ENCODE measurements at regions of chr12 and their contacts with region 1.

Region 1: DNA sequence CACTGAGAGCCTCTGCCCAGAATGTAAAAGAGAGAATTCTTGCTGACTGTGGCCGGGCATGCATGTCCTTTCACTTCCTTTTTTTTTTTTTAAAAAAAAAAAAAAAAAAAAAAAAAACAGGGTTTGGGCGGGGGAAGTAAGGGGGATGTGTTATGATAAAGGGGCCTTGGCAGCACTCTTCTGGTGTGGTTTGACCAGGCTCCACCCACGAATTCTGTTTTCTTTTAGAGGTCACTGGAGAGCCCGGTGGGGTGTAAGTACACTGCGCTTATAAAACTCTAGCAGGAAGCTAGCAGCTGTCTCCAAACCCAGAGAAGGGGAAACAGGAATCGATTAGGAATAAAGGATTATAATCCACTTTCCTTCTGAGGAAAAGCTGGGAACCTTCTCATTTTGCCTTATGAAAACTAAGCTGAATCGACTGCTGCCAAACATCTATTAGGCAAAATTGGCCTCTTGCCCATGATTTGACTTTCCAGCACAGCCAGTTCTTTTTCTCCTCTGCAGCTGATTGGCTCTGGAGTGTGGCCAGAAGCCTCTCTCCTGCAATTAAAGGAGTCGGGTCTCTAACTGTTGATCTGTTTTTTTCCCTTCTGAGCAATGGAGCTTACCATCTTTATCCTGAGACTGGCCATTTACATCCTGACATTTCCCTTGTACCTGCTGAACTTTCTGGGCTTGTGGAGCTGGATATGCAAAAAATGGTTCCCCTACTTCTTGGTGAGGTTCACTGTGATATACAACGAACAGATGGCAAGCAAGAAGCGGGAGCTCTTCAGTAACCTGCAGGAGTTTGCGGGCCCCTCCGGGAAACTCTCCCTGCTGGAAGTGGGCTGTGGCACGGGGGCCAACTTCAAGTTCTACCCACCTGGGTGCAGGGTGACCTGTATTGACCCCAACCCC is 27.7 kb upstream of the HIGD1C start:
- DNase-seq: peak; percentile 97
- H3K4me3 ChIP-seq: peak overlapping the region; percentile 65 to 92 (median 80)
- H3K27ac ChIP-seq: peak overlapping the region; percentile 95 to 99 (median 98)
- H3K4me1 ChIP-seq: peaks cover 30 to 34% of the 10 kb centered on the region in 2 donors
- H3K27me3 ChIP-seq: no peaks in the 10 kb centered on the region
- CTCF ChIP-seq: no peak
- POLR2A ChIP-seq: peak in 1 of 2 donors; percentile 93

Region 2: DNA sequence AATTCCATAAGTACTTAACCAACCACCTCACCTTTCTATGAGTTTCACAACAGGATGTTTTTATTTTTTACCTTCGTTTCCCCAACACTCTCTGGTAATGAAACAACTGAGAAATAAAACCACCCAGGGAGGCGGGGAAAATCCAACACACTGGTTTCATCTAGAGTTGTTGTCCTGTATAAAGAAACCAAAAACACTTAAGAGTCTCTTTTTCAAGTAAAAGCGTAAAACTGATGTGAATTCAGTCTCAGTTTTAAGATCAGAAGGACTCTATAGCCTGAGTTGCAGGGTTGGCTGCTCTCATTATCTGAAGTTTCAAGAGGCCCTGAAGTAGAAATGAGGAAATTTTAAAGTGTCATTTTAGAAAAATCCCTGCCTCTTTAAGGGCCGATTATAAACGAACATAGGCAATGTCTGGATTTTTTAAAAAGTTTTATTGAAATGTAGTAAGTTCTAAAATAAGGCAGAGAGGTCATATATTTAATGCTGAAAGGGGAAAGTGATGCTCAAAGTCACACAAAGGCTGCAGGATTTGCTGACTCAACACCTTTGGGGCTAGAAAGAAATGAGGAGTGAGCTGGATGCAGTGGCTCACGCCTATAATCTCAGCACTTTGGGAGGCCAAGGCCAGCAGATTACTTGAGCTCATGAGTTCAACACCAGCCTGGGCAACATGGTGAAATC is 54.8 kb after region 1 on chr12:
- intact Hi-C with region 1: loop called (anchors 5 kb)
- DNase-seq: peak; percentile 19 to 45
- H3K4me3 ChIP-seq: no peak overlapping the region
- H3K27ac ChIP-seq: peak overlapping the region; percentile 37 to 64 (median 64)
- H3K4me1 ChIP-seq: peaks cover 12 to 22% of the 10 kb centered on the region in 2 donors
- H3K27me3 ChIP-seq: no peaks in the 10 kb centered on the region
- CTCF ChIP-seq: no peak
- POLR2A ChIP-seq: no peak

Region 3: DNA sequence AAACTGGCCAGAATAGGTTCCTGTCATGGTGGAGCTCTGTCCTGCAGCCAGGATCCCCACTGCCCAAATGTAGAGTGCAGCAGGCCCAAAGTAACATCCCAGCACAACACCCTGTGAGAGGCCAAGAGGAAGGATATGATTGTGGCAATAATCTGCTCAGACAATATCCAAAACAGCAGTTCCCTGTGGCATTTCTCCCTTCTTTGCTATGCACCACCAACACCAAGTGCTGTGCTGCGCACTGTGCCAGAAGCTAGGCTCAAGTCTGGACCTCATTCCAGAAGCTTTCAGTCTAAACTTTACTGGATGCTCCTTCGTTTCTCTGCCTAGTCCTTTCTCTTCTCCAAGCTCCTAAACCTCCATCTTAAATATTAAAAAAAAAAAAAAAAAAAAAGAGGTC is 68.1 kb after region 1 on chr12:
- intact Hi-C with region 1: no loop called
- DNase-seq: peak; percentile 89 to 91
- H3K4me3 ChIP-seq: no peak overlapping the region
- H3K27ac ChIP-seq: peak overlapping the region; percentile 43 to 73 (median 61)
- H3K4me1 ChIP-seq: peaks cover 17 to 30% of the 10 kb centered on the region in 2 donors
- H3K27me3 ChIP-seq: no peaks in the 10 kb centered on the region
- CTCF ChIP-seq: no peak
- POLR2A ChIP-seq: no peak

Region 4: DNA sequence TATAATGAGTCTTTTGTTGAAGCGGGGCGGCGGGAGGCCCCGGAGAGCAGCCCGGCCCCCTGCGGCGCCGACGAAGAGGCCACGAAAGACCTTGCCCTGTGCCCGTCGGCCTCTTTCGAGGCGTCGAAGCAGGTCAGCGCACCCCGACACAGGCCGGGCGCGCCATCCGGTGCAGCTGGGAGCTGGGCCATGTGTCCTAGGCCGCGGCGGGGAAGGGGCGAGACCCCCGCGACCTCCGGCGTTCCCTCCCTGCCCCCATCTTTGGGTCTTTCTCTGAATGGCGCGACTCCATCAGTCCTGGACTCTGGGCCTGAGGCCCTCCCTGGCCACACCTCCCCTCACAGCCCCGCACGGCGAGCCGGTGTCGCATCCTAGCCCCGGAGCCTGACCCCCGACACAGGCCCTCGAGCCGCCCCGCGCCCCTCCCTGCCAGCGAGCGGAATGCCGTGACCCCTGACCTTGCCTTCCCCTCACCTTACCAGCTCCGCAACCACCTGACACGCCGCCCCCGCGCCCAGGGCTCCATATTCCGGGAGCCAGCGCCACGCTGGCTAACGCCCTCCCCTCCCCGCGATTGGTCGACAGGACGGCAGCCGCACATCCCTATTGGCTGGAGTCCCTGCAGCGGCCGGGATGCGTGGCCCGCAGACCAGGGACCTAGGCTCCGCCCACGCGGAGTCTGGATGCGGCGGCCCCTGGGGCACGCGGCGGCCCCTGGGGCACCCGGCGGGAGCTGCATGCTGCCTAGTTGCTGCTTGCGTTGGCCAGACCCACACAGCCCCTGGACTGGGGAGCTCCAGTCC is 101.3 kb after region 1 on chr12 and contains the start of gene SLC11A2:
- intact Hi-C with region 1: loop called (anchors 5 kb)
- DNase-seq: peak; percentile 98
- H3K4me3 ChIP-seq: peak within 1 kb of the TSS; percentile 28 to 82 (median 33)
- H3K27ac ChIP-seq: peak within 1 kb of the TSS; percentile 92 to 99 (median 97)
- H3K4me1 ChIP-seq: peaks cover 14 to 45% of the 10 kb centered on the region in 2 donors
- H3K27me3 ChIP-seq: no peaks in the 10 kb centered on the region
- CTCF ChIP-seq: peak in 4 of 6 experiments; percentile 6 to 36 (median 25)
- POLR2A ChIP-seq: peak; percentile 80 to 98
- total RNA-seq, gene SLC11A2: 100 to 163 (median 140) TPM

Measured in thyroid gland (tissue), 4 donors.